Ovary (tissue), 10 donors: ENCODE measurements at regions of chr13 and their contacts with region 1.

Region 1: DNA sequence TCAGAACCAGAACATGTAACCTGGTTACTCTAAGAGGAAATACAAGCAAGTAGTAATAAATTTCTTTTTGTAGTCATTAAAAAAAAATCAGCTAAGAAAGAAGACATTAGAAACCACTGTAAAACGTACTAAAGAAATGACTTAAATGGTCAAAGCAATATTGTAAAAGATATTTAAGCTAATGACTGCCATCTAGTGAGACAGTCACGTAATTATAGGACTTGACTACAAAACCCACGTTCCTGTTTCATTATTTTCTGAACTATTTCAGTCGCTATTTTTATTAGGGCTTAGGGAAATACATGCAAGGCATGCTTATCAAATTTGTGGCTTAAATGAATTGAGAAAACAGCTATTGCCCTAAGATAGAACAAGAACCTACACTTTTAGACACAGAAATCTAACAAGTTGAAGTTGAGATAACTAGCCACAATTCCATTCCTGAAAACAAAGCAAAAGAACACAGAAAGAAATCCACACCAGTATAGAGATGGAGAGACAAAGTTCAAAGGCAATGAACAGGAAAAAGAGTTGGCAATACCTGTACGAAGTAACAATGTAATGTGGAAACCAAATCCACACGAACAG is 17.9 kb downstream of the ALG5 start:
- DNase-seq: no peak
- H3K4me3 ChIP-seq: no peak overlapping the region
- H3K27ac ChIP-seq: no peak overlapping the region
- H3K4me1 ChIP-seq: no peaks in the 10 kb centered on the region
- H3K27me3 ChIP-seq: no peaks in the 10 kb centered on the region
- CTCF ChIP-seq: peak in 1 of 3 donors; percentile 38
- EP300 ChIP-seq: no peak
- POLR2A ChIP-seq: no peak

Region 2: DNA sequence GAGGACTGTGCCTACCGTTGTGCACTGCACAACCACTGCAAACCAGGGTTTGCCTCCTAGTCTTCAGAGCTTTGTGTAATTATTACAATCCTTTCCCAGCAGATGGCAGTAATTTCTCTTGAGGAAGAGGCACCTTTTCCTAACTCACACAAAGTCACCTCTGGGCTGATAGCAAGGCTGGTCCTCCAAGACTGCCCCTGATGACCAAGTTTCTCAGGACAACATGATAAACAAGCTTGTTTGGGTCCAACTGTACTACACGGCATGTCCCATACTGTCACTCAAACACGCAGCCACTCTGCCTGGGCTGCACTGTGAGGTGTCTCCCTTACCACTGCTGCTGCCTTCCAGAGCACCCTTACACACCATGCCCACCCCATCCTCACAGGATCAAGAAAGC is 123.0 kb before region 1 on chr13:
- intact Hi-C with region 1: loop called in 2 of 4 experiments (anchors 5 kb)
- DNase-seq: no peak
- H3K4me3 ChIP-seq: no peak overlapping the region
- H3K27ac ChIP-seq: no peak overlapping the region
- H3K4me1 ChIP-seq: no peaks in the 10 kb centered on the region
- H3K27me3 ChIP-seq: no peaks in the 10 kb centered on the region
- CTCF ChIP-seq: peak in 1 of 3 donors; percentile 8
- EP300 ChIP-seq: no peak
- POLR2A ChIP-seq: no peak

Region 3: GRCh38 chr13:36866232-36866631 is 115.0 kb before region 1 on chr13:
- intact Hi-C with region 1: loop called in 2 of 4 experiments (anchors 5 kb)
- DNase-seq: no peak
- H3K4me3 ChIP-seq: no peak overlapping the region
- H3K27ac ChIP-seq: no peak overlapping the region
- H3K4me1 ChIP-seq: no peaks in the 10 kb centered on the region
- H3K27me3 ChIP-seq: no peaks in the 10 kb centered on the region
- CTCF ChIP-seq: no peak
- EP300 ChIP-seq: no peak
- POLR2A ChIP-seq: no peak